ENCODE measurements at regions of chr12 and their contacts with region 1.

Region 1: GRCh38 chr12:104201238-104202001 is 14.2 kb upstream of the TXNRD1 start:
- DNase-seq: peak; percentile 8 to 72 (median 59)
- ATAC-seq: peak; percentile 78
- H3K4me3 ChIP-seq: no peak overlapping the region
- H3K4me3 Mint-ChIP-seq: peak overlapping the region in 1 of 10 donors; percentile 54
- H3K27ac ChIP-seq: no peak overlapping the region
- H3K27ac Mint-ChIP-seq: no peak overlapping the region
- H3K4me1 ChIP-seq: no peaks in the 10 kb centered on the region
- H3K4me1 Mint-ChIP-seq: peaks cover 0 to 4% (median 3%) of the 10 kb centered on the region in 7 donors
- H3K27me3 ChIP-seq: no peaks in the 10 kb centered on the region
- H3K27me3 Mint-ChIP-seq: peaks cover 5 to 24% (median 9%) of the 10 kb centered on the region in 5 donors

Region 2: GRCh38 chr12:103771466-103771865 is 430.0 kb before region 1 on chr12:
- CTCF ChIA-PET with region 1: no interaction called
- POLR2A ChIA-PET with region 1: no interaction called
- intact Hi-C with region 1: no loop called
- DNase-seq: no peak
- ATAC-seq: peak; percentile 40
- H3K4me3 ChIP-seq: no peak overlapping the region
- H3K4me3 Mint-ChIP-seq: no peak overlapping the region
- H3K27ac ChIP-seq: no peak overlapping the region
- H3K27ac Mint-ChIP-seq: peak overlapping the region in 1 of 9 donors; percentile 25
- H3K4me1 ChIP-seq: no peaks in the 10 kb centered on the region
- H3K4me1 Mint-ChIP-seq: no peaks in the 10 kb centered on the region
- H3K27me3 ChIP-seq: no peaks in the 10 kb centered on the region
- H3K27me3 Mint-ChIP-seq: no peaks in the 10 kb centered on the region

Region 3: DNA sequence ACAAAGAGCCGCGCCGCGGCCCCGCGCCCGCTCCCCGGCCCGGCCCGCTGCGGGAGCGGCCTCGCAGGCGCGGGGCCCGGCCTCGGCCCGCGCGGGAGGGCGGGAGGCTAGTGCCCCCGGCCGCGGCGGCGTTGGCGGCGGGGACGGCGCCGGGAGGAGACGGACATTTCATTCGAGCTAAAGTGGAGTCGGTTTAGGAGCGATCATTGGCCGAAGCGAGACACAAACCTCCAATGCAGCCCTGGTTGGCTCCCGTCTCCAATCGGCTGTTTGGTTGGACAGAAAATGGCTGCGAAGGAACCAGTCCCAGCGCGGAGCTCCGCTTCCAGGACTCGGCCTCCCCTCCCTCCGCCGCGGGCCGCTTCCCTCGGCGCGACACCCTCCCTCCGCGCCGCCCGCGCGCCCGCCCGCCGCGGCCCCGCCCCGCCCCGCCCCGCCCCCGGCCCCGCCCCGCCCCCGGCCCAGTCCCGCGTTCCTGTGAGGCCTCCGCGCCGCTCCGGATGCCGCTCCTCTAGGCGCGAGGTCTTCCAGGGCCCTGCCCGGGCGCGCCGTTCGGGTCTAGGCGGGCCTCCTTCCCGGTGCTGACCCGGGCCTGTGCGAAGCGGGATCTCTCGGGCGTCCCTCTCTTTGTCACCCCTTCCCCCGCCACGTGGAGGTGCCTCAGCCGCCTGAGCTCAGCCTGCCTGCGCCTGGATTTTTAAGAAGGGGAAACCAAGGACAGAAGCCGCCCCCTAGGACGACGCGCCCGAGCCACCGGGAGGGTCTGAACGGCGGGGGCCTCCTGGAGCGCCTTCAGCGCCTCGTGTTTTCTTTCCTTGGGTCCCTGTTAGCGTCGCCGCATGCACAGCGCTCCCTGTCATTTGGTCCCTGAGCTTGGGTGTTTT is 63.3 kb before region 1 on chr12 and contains the start of gene NFYB:
- CTCF ChIA-PET with region 1: no interaction called
- POLR2A ChIA-PET with region 1: no interaction called
- intact Hi-C with region 1: no loop called
- DNase-seq: peak; percentile 90 to 96 (median 94)
- ATAC-seq: peak; percentile 97
- H3K4me3 ChIP-seq: peak within 1 kb of the TSS; percentile 69
- H3K4me3 Mint-ChIP-seq: peak within 1 kb of the TSS; percentile 81 to 93 (median 90)
- H3K27ac ChIP-seq: peak within 1 kb of the TSS; percentile 72
- H3K27ac Mint-ChIP-seq: peak within 1 kb of the TSS; percentile 71 to 95 (median 89)
- H3K4me1 ChIP-seq: peaks cover 10 to 23% of the 10 kb centered on the region in 2 donors
- H3K4me1 Mint-ChIP-seq: peaks cover 0 to 22% (median 9%) of the 10 kb centered on the region in 7 donors
- H3K27me3 ChIP-seq: no peaks in the 10 kb centered on the region
- H3K27me3 Mint-ChIP-seq: peaks cover 0 to 24% (median 0%) of the 10 kb centered on the region in 5 donors
- total RNA-seq, gene NFYB: 11.6 to 25.9 (median 24.4) TPM

Region 4: GRCh38 chr12:104234926-104235499 is 33.6 kb after region 1 on chr12:
- CTCF ChIA-PET with region 1: no interaction called
- POLR2A ChIA-PET with region 1: no interaction called
- intact Hi-C with region 1: no loop called
- DNase-seq: no peak
- ATAC-seq: no peak
- H3K4me3 ChIP-seq: no peak overlapping the region
- H3K4me3 Mint-ChIP-seq: no peak overlapping the region
- H3K27ac ChIP-seq: no peak overlapping the region
- H3K27ac Mint-ChIP-seq: no peak overlapping the region
- H3K4me1 ChIP-seq: no peaks in the 10 kb centered on the region
- H3K4me1 Mint-ChIP-seq: peaks cover 0 to 2% (median 0%) of the 10 kb centered on the region in 7 donors
- H3K27me3 ChIP-seq: no peaks in the 10 kb centered on the region
- H3K27me3 Mint-ChIP-seq: peaks cover 3 to 5% (median 4%) of the 10 kb centered on the region in 5 donors

Region 5: GRCh38 chr12:104877123-104877705 is 675.8 kb after region 1 on chr12:
- CTCF ChIA-PET with region 1: no interaction called
- POLR2A ChIA-PET with region 1: no interaction called
- intact Hi-C with region 1: loop called (anchors 1 to 10 kb)
- DNase-seq: peak in 7 of 9 donors; percentile 5 to 52 (median 29)
- ATAC-seq: peak; percentile 56
- H3K4me3 ChIP-seq: no peak overlapping the region
- H3K4me3 Mint-ChIP-seq: no peak overlapping the region
- H3K27ac ChIP-seq: no peak overlapping the region
- H3K27ac Mint-ChIP-seq: no peak overlapping the region
- H3K4me1 ChIP-seq: no peaks in the 10 kb centered on the region
- H3K4me1 Mint-ChIP-seq: peaks cover 0 to 9% (median 0%) of the 10 kb centered on the region in 7 donors
- H3K27me3 ChIP-seq: no peaks in the 10 kb centered on the region
- H3K27me3 Mint-ChIP-seq: peaks cover 0 to 12% (median 0%) of the 10 kb centered on the region in 5 donors

Measured in naive thymus-derived CD4-positive, alpha-beta T cell (primary cell).